CD8-positive, alpha-beta T cell (primary cell): ENCODE measurements at regions of chr11 and their contacts with region 1.

Region 1: GRCh38 chr11:43880640-43881159 is at the start of gene ALKBH3:
- DNase-seq: peak; percentile 81 to 95 (median 91)
- ATAC-seq: peak; percentile 98
- H3K4me3 ChIP-seq: peak within 1 kb of the TSS; percentile 70 to 75
- H3K4me3 Mint-ChIP-seq: peak within 1 kb of the TSS; percentile 97
- H3K27ac ChIP-seq: peak within 1 kb of the TSS; percentile 51 to 74
- H3K27ac Mint-ChIP-seq: peak within 1 kb of the TSS; percentile 97
- H3K4me1 ChIP-seq: peaks cover 20% of the 10 kb centered on the region
- H3K4me1 Mint-ChIP-seq: peaks cover 39% of the 10 kb centered on the region
- H3K27me3 ChIP-seq: peaks cover 0 to 3% of the 10 kb centered on the region in 2 experiments
- H3K27me3 Mint-ChIP-seq: peaks cover 20% of the 10 kb centered on the region
- CTCF ChIP-seq: no peak
- total RNA-seq, gene ALKBH3: 14.5 to 19.4 TPM

Region 2: GRCh38 chr11:43358801-43359421 is 521.8 kb before region 1 on chr11 and contains the start of gene TTC17:
- CTCF ChIA-PET with region 1: no interaction called
- POLR2A ChIA-PET with region 1: interaction called, 3 read pairs
- intact Hi-C with region 1: loop called in 1 of 2 experiments (anchors 5 kb)
- DNase-seq: peak; percentile 83 to 96 (median 92)
- ATAC-seq: peak; percentile 94
- H3K4me3 ChIP-seq: peak within 1 kb of the TSS; percentile 84 to 93
- H3K4me3 Mint-ChIP-seq: peak within 1 kb of the TSS; percentile 99
- H3K27ac ChIP-seq: peak within 1 kb of the TSS; percentile 87 to 92
- H3K27ac Mint-ChIP-seq: peak within 1 kb of the TSS; percentile 98
- H3K4me1 ChIP-seq: peaks cover 17% of the 10 kb centered on the region
- H3K4me1 Mint-ChIP-seq: peaks cover 47% of the 10 kb centered on the region
- H3K27me3 ChIP-seq: no peaks in the 10 kb centered on the region
- H3K27me3 Mint-ChIP-seq: no peaks in the 10 kb centered on the region
- CTCF ChIP-seq: no peak
- total RNA-seq, gene TTC17: 84.0 to 85.6 TPM

Region 3: GRCh38 chr11:43680521-43681400 is 199.9 kb before region 1 on chr11 and contains the start of gene HSD17B12:
- CTCF ChIA-PET with region 1: no interaction called
- POLR2A ChIA-PET with region 1: interaction called, 3 read pairs
- intact Hi-C with region 1: loop called (anchors 5 kb)
- DNase-seq: peak; percentile 98 to 100 (median 98)
- ATAC-seq: peak; percentile 94
- H3K4me3 ChIP-seq: peak within 1 kb of the TSS; percentile 84
- H3K4me3 Mint-ChIP-seq: peak within 1 kb of the TSS; percentile 89
- H3K27ac ChIP-seq: peak within 1 kb of the TSS; percentile 91 to 92
- H3K27ac Mint-ChIP-seq: peak within 1 kb of the TSS; percentile 98
- H3K4me1 ChIP-seq: peaks cover 15% of the 10 kb centered on the region
- H3K4me1 Mint-ChIP-seq: peaks cover 32% of the 10 kb centered on the region
- H3K27me3 ChIP-seq: no peaks in the 10 kb centered on the region
- H3K27me3 Mint-ChIP-seq: no peaks in the 10 kb centered on the region
- CTCF ChIP-seq: no peak
- total RNA-seq, gene HSD17B12: 13.8 to 14.0 TPM

Region 4: DNA sequence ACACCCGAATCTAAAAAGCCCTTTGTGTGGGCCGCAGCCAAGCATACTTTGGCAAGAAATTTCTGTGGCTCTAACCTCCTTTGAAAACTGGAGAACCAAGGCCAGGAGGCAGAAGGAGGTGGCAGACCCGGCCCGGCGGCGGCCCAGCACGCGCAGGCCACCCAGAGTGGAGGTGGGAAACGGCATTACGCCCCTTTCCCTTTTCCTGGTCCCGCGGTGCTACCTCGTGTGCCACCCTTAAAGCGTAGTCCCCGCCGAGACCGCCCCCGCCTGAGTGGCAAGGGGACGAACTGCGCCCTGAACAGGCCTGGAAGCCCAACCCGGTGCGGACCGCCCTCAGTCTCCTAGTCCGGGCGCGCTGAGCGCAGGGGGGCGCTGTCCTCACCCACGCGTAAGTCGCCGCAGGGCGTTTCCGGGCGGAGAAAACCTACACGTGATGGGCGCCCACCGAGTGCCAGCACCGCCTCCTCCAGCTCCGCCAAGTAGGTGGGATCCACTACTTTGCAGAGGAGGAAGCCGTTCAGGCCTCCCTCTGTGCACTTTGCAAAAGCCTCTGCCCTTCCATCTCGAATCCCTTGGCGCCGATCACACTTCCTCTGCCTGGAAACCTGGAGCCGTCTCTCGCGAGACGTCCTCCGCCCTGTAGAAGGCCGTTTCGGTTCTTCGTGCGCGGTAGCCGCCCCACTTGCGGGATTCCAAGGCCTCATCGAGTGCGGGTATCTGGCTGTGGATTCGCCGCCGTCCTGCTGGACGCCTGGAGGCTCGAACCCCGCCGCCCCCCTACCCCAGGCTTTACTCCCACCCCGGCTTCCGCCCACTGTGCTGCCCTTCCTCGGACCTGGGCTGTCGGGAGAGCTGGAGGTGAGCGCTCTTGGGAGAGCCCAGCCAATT is 185.4 kb after region 1 on chr11 and contains the start of gene ACCS:
- CTCF ChIA-PET with region 1: no interaction called
- POLR2A ChIA-PET with region 1: no interaction called
- intact Hi-C with region 1: loop called (anchors 1 to 5 kb)
- DNase-seq: peak; percentile 80 to 96 (median 93)
- ATAC-seq: peak; percentile 96
- H3K4me3 ChIP-seq: peak within 1 kb of the TSS; percentile 80 to 83
- H3K4me3 Mint-ChIP-seq: peak within 1 kb of the TSS; percentile 91
- H3K27ac ChIP-seq: peak within 1 kb of the TSS; percentile 70 to 71
- H3K27ac Mint-ChIP-seq: peak within 1 kb of the TSS; percentile 92
- H3K4me1 ChIP-seq: peaks cover 6% of the 10 kb centered on the region
- H3K4me1 Mint-ChIP-seq: peaks cover 30% of the 10 kb centered on the region
- H3K27me3 ChIP-seq: no peaks in the 10 kb centered on the region
- H3K27me3 Mint-ChIP-seq: no peaks in the 10 kb centered on the region
- CTCF ChIP-seq: peak; percentile 83
- total RNA-seq, gene ACCS: 16.7 to 18.1 TPM

Region 5: GRCh38 chr11:45354976-45355705 is 1474.4 kb after region 1 on chr11:
- CTCF ChIA-PET with region 1: no interaction called
- POLR2A ChIA-PET with region 1: no interaction called
- intact Hi-C with region 1: loop called (anchors 5 to 10 kb)
- DNase-seq: peak; percentile 80 to 95 (median 89)
- ATAC-seq: peak; percentile 96
- H3K4me3 ChIP-seq: peak overlapping the region; percentile 66 to 72
- H3K4me3 Mint-ChIP-seq: peak overlapping the region; percentile 80
- H3K27ac ChIP-seq: peak overlapping the region; percentile 48 to 68
- H3K27ac Mint-ChIP-seq: peak overlapping the region; percentile 80
- H3K4me1 ChIP-seq: peaks cover 13% of the 10 kb centered on the region
- H3K4me1 Mint-ChIP-seq: peaks cover 14% of the 10 kb centered on the region
- H3K27me3 ChIP-seq: no peaks in the 10 kb centered on the region
- H3K27me3 Mint-ChIP-seq: peaks cover 5% of the 10 kb centered on the region
- CTCF ChIP-seq: no peak